Left ventricle myocardium superior (tissue), 1 donor: ENCODE measurements at regions of chr4 and their contacts with region 1.

Region 1: DNA sequence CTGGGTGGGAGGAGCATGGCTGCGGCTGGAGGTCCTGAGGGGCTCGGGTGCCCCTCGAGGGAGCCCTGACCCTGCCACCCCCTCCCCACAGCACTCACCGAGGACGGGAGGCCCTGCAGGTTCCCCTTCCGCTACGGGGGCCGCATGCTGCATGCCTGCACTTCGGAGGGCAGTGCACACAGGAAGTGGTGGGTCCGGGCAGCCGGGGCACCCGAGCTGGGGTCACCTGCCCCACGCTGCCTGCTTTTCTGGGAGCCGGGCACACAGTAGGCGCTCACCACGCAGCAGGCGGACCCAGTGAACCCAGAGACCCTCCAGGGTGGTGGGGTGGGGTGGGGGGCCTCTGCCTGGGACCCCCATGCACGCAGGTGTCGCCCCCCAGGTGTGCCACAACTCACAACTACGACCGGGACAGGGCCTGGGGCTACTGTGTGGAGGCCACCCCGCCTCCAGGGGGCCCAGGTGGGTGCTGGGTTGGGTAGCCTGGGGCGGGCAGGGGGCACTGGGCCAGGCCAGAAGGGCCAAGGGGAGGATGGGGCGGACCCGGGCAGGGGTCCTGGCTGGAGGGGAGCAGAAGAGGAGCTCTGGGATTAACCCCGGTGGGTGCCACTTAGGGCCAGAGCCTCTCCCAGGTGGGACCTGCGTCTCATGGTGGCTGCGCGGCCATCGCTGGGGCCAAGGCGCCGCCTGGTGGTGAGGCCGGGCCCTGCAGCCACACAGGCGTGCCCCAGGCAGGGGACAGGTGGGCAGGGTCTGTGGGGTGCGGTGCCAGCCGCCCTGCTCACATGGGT is 1.4 kb downstream of the HGFAC start:
- DNase-seq: peak; percentile 76
- ATAC-seq: peak; percentile 76

Region 2: GRCh38 chr4:3322059-3322550 is 121.0 kb before region 1 on chr4:
- intact Hi-C with region 1: no loop called
- DNase-seq: no peak
- ATAC-seq: no peak

Region 3: GRCh38 chr4:3346146-3346545 is 97.0 kb before region 1 on chr4:
- intact Hi-C with region 1: loop called (anchors 10 kb)
- DNase-seq: no peak
- ATAC-seq: peak; percentile 94

Region 4: DNA sequence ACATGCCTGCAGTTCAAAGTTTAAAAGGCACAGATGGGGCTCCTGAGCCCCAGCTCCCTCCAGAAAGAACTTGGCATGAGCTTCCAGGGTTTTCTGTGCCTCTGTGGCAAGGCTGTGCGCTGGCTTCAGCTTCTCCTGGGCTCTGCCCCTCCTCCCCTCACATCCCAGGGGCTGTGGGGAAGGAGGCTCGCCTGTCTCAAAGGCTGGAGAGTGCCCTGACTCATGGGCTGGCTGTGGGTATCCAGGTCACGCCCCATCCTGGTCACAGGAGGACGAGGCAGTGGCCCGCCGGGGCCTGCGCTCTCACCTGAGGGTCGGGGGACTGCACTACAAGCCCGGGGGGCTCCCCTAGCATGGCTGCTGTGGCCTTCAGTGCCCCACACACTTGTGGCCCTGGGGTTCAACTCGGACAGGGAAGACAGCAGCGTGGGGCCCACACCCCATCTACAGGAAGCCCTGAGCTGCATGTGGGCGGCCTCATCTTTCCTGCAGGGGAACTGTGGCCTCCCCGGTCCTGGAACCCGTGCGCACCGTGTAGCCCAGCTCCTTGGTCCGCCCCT is 71.1 kb after region 1 on chr4:
- intact Hi-C with region 1: no loop called
- DNase-seq: no peak
- ATAC-seq: no peak

Region 5: DNA sequence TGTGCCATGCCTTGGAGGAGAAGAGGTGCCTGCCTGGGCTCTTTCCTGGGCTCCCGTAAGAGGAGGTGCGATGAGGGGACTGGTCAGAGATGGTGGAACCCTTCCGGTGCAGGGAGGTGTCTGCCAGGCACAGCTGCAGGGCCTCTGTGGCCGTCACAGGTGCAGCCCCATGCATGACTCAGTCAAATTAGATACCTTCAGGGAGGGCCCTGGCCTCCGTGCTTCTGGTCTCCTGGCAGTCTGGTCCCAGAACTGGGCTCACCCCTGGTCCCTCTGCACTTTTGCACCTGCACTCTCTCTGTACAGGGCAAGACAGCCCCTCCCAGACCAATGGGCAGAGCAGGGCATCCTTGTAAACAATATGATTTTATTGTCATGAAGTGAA is 138.9 kb after region 1 on chr4:
- intact Hi-C with region 1: no loop called
- DNase-seq: peak; percentile 5
- ATAC-seq: no peak

Region 6: DNA sequence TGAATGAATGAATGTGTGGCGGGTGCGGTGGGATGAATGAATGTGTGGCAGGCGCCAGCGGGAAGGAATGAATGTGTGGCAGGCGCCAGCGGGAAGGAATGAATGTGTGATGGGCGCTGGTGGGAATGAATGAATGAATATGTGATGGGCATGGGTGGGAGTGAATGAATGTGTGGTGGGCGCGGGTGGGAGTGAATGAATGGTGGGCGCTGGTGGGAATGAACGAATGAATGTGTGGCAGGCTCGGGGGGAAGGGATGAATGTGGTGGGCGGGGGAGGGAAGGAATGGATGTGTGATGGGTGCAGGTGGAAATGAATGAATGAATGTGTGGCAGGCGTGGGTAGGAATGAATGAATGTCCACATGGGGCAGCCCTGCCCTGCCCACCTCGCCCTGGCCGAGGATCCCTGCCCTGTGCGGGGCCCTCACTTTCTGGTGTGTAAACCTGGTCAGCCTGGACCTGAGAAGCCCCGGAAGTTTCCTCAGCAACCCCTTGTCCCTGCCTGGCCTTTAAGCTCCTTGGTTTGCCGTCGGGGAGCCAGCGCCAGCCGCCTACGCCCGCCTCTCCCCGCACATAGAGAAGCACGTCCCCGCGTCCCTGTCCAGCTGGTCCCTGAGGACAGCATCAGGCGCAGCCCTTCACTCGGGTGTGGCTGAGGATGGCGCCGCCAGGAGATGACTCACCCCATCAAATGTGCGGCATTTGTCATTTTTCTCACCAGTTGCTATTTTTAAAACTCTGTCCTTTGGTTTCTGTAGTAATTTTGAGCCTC is 201.9 kb after region 1 on chr4:
- intact Hi-C with region 1: no loop called
- DNase-seq: peak; percentile 31
- ATAC-seq: no peak